H1 (cell line): ENCODE measurements at regions of chr3 and their contacts with region 1.

Region 1: GRCh38 chr3:112338021-112338726 is 5.2 kb downstream of the CD200 start:
- DNase-seq: no peak
- H3K4me3 ChIP-seq: no peak overlapping the region
- H3K27ac ChIP-seq: no peak overlapping the region
- H3K4me1 ChIP-seq: peaks cover 2 to 22% (median 15%) of the 10 kb centered on the region in 4 experiments; a peak in 6 of 7 replicates
- H3K27me3 ChIP-seq: no peaks in the 10 kb centered on the region
- CTCF ChIP-seq: no peak
- EP300 ChIP-seq: no peak
- POLR2A ChIP-seq: no peak
- RAD21 ChIP-seq: no peak

Region 2: DNA sequence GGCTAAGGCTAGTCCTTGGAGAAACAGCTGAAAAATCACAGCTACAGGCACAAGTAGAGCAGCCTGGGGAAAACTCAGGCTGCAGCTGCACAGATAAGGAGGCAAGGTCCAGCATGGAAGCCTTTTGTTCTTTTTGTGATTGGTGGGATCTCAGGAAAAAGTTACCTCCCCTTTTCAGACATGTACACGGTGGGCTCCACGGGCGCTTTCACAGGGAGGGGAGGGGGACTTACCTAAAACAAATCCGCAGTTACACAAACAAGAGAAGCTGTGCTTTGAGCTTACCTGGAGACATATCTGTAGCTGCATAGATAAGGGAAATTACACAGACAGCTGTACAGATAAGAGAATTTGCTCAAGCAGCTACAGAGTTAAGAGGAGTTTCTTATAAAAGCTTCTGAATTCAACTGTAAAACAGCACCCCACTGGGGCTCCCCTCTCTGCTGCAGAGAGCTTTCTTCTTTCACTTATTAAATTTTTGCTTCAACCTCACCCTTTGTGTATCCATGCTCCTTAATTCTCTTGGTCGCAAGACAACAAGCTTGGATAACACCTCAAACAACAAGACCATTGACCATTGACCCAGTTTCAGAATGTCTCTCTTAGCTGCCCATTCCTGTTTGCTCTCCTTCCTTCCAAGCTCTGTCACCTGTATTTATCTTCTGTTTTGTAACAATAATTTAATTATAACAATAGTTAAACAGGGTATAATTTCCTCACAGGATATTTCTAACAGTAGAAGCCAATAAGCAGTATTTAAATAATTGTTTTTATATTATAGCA is 16.1 kb before region 1 on chr3:
- CTCF ChIA-PET with region 1: interaction called, 10 read pairs
- POLR2A ChIA-PET with region 1: interaction called, 16 read pairs
- DNase-seq: no peak
- H3K4me3 ChIP-seq: peak overlapping the region in 1 of 4 experiments; percentile 28; a peak in 1 of 8 replicates
- H3K27ac ChIP-seq: peak overlapping the region; percentile 25; the same call in 1 of the 2 replicates
- H3K4me1 ChIP-seq: peaks cover 0 to 16% (median 8%) of the 10 kb centered on the region in 4 experiments; a peak in 5 of 7 replicates
- H3K27me3 ChIP-seq: no peaks in the 10 kb centered on the region
- CTCF ChIP-seq: no peak
- EP300 ChIP-seq: no peak
- POLR2A ChIP-seq: no peak
- RAD21 ChIP-seq: no peak

Region 3: DNA sequence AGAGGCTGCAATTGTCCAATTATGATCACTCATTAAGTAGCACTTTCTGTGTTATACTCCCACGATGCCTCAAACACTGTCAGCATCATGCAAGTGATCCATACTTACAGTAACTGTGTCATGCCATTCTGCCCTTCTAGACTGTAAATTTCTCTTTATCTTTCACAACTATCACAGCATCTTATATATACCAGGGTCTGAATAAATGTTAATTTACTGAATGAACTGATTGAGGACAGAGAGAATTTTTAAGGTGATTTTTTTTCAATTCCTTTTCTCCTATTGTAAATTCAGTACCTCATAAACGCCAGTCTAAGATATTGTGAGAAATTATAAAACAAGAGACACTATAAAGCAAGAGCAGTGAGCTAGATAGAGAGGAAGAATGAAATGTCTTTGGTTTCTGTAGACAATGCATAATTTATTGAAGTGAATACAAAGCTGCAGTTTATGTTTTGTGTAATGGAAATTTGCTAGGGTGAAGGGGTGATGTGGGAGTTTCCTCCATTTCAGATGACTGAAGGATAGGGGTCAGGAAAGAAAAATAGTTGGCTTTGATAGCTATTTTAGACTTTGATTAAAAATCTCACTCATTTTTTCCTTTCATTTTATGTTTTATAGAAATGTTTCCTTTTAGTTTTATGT is 12.1 kb after region 1 on chr3:
- CTCF ChIA-PET with region 1: interaction called, 10 read pairs
- POLR2A ChIA-PET with region 1: interaction called, 29 read pairs
- DNase-seq: no peak
- H3K4me3 ChIP-seq: no peak overlapping the region
- H3K27ac ChIP-seq: no peak overlapping the region
- H3K4me1 ChIP-seq: peaks cover 2 to 30% (median 22%) of the 10 kb centered on the region in 4 experiments
- H3K27me3 ChIP-seq: no peaks in the 10 kb centered on the region
- CTCF ChIP-seq: no peak
- EP300 ChIP-seq: no peak
- POLR2A ChIP-seq: no peak
- RAD21 ChIP-seq: no peak